ENCODE measurements at regions of chr4 and their contacts with region 1.

Region 1: DNA sequence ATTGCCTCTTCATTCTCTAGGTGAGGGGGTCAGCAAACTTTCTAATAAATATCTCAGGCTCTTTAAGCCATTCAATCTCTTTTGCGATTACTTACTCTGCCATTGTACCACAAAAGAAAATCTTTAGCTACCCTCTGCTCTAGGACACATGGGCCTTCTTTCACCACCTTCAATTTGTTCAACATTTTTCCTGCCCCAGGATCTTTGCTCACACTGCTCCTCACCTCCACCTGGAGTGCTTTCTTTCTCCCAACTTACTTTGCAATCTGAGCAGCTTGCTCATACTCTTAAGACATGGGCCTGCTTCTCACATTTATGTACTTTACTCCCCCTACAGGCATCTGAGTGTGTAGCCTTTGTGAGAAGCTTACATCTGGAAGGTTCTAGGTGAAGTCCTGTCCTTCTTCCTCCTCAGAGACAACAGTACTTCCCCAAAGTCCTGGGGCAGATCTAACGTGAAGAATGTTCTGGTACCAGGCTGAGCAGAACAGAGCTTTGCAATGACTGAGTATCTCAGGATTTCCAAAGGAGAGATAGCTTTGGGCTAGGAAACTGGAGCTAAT is 55.0 kb upstream of the PRDM5 start:
- DNase-seq: no peak
- H3K4me3 ChIP-seq: no peak overlapping the region
- H3K27ac ChIP-seq: no peak overlapping the region
- H3K4me1 ChIP-seq: no peaks in the 10 kb centered on the region
- H3K27me3 ChIP-seq: no peaks in the 10 kb centered on the region
- CTCF ChIP-seq: peak in 2 of 3 experiments; percentile 47 to 69; a peak in 3 of 4 replicates
- EP300 ChIP-seq: no peak
- POLR2A ChIP-seq: no peak
- RAD21 ChIP-seq: peak; percentile 58 to 72

Region 2: GRCh38 chr4:120902925-120903324 is 74.6 kb before region 1 on chr4:
- CTCF ChIA-PET with region 1: no interaction called
- POLR2A ChIA-PET with region 1: no interaction called
- DNase-seq: no peak
- H3K4me3 ChIP-seq: no peak overlapping the region
- H3K27ac ChIP-seq: no peak overlapping the region
- H3K4me1 ChIP-seq: no peaks in the 10 kb centered on the region
- H3K27me3 ChIP-seq: no peaks in the 10 kb centered on the region
- CTCF ChIP-seq: no peak
- EP300 ChIP-seq: no peak
- POLR2A ChIP-seq: no peak
- RAD21 ChIP-seq: no peak

Region 3: DNA sequence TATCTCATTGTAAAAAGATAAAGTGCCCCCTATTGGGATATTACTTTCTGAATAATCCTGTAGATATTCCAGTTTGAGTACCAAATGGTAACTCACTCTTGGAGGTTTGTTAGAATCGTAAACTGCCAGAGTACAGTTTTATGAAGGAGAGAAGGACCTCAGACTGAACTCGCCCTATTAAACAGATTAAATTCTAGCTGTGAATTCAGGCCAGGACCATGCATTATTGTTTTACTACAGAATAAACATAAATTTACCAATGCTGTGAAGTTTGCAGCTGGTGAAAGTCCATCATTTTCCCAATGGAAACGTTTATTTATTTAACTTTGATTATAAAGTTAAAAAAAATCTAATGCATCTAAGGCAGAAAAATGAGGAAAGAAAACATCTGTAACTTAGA is 34.7 kb before region 1 on chr4:
- CTCF ChIA-PET with region 1: no interaction called
- POLR2A ChIA-PET with region 1: no interaction called
- DNase-seq: no peak
- H3K4me3 ChIP-seq: no peak overlapping the region
- H3K27ac ChIP-seq: no peak overlapping the region
- H3K4me1 ChIP-seq: no peaks in the 10 kb centered on the region
- H3K27me3 ChIP-seq: no peaks in the 10 kb centered on the region
- CTCF ChIP-seq: no peak
- EP300 ChIP-seq: no peak
- POLR2A ChIP-seq: no peak
- RAD21 ChIP-seq: no peak

Region 4: GRCh38 chr4:120991930-120992329 is 14.4 kb after region 1 on chr4:
- CTCF ChIA-PET with region 1: interaction called, 17 read pairs
- POLR2A ChIA-PET with region 1: no interaction called
- DNase-seq: no peak
- H3K4me3 ChIP-seq: no peak overlapping the region
- H3K27ac ChIP-seq: no peak overlapping the region
- H3K4me1 ChIP-seq: peaks cover 0 to 7% (median 0%) of the 10 kb centered on the region in 4 experiments; a peak in 2 of 7 replicates
- H3K27me3 ChIP-seq: no peaks in the 10 kb centered on the region
- CTCF ChIP-seq: no peak
- EP300 ChIP-seq: no peak
- POLR2A ChIP-seq: no peak
- RAD21 ChIP-seq: no peak